GM10248 (cell line): ENCODE measurements at regions of chr2 and their contacts with region 1.

Region 1: GRCh38 chr2:100580367-100581276 is 17.8 kb downstream of the PDCL3 start:
- DNase-seq: peak; percentile 64
- CTCF ChIP-seq: no peak

Region 2: GRCh38 chr2:100562732-100563720 is 17.6 kb before region 1 on chr2 and contains the start of gene PDCL3:
- CTCF ChIA-PET with region 1: interaction called, 10 read pairs
- POLR2A ChIA-PET with region 1: no interaction called
- DNase-seq: peak; percentile 97
- CTCF ChIP-seq: no peak

Region 3: DNA sequence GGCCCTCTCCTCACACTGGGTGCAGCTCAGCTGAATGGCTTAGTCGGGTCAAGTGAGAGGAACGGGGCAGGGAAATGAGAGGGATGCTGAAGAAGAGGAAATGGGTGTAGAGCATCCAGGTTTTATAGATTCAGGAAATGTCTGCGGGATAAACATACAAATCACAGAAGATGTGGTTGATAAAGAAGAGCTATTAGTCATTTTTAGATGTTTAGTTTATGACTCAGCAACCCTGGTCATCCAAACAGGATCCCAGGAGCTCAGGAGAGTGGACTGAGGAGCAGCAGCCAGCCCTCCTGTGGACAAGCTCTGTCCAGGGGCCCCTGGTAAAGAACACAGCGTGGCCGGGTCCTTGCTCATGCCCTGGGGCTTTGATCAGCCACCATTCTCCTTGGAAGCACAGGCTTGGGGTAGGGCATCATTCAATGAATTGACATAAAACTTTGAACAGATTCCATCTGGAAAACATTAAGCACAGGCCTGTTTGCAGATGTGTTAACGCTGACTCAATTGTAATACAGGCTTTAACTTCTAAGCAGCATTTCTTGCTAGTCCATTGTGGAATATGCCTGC is 322.3 kb after region 1 on chr2:
- CTCF ChIA-PET with region 1: no interaction called
- POLR2A ChIA-PET with region 1: no interaction called
- DNase-seq: no peak
- CTCF ChIP-seq: no peak